Posterior vena cava (tissue), 2 donors: ENCODE measurements at regions of chr4 and their contacts with region 1.

Region 1: GRCh38 chr4:185020293-185020808 is 2.1 kb downstream of the HELT start:
- DNase-seq: peak; percentile 31

Region 2: GRCh38 chr4:185404031-185404430 is 383.7 kb after region 1 on chr4:
- intact Hi-C with region 1: loop called in 1 of 2 experiments (anchors 5 kb)
- DNase-seq: no peak